ENCODE measurements at regions of chr11 and their contacts with region 1.

Region 1: GRCh38 chr11:111230122-111230465 is 15.4 kb upstream of the POU2AF2 start:
- DNase-seq: no peak
- ATAC-seq: peak; percentile 50
- H3K4me3 ChIP-seq: no peak overlapping the region
- H3K27ac ChIP-seq: peak overlapping the region; percentile 33; the same call in 1 of the 2 replicates
- H3K4me1 ChIP-seq: peaks cover 8% of the 10 kb centered on the region
- H3K27me3 ChIP-seq: no peaks in the 10 kb centered on the region
- CTCF ChIP-seq: no peak
- POLR2A ChIP-seq: no peak
- RAD21 ChIP-seq: no peak

Region 2: GRCh38 chr11:110565357-110566336 is 664.4 kb before region 1 on chr11:
- CTCF ChIA-PET with region 1: no interaction called
- POLR2A ChIA-PET with region 1: no interaction called
- dilution Hi-C with region 1: no loop called
- in situ Hi-C with region 1: no loop called
- intact Hi-C with region 1: loop called (anchors 5 kb)
- DNase-seq: peak; percentile 64
- ATAC-seq: peak; percentile 83
- H3K4me3 ChIP-seq: no peak overlapping the region
- H3K27ac ChIP-seq: no peak overlapping the region
- H3K4me1 ChIP-seq: peaks cover 8% of the 10 kb centered on the region; the same call in 1 of the 2 replicates
- H3K27me3 ChIP-seq: peaks cover 8% of the 10 kb centered on the region
- CTCF ChIP-seq: no peak
- POLR2A ChIP-seq: no peak
- RAD21 ChIP-seq: no peak

Region 3: GRCh38 chr11:110763249-110764011 is 466.7 kb before region 1 on chr11:
- CTCF ChIA-PET with region 1: no interaction called
- POLR2A ChIA-PET with region 1: no interaction called
- dilution Hi-C with region 1: no loop called
- in situ Hi-C with region 1: no loop called
- intact Hi-C with region 1: loop called (anchors 2 kb)
- DNase-seq: peak; percentile 80
- ATAC-seq: peak; percentile 52
- H3K4me3 ChIP-seq: no peak overlapping the region
- H3K27ac ChIP-seq: peak overlapping the region; percentile 86; the same call in 1 of the 2 replicates
- H3K4me1 ChIP-seq: peaks cover 11% of the 10 kb centered on the region
- H3K27me3 ChIP-seq: no peaks in the 10 kb centered on the region
- CTCF ChIP-seq: no peak
- POLR2A ChIP-seq: no peak
- RAD21 ChIP-seq: no peak

Region 4: GRCh38 chr11:110907629-110908028 is 322.5 kb before region 1 on chr11:
- CTCF ChIA-PET with region 1: interaction called, 4 read pairs
- POLR2A ChIA-PET with region 1: no interaction called
- dilution Hi-C with region 1: no loop called
- in situ Hi-C with region 1: no loop called
- intact Hi-C with region 1: loop called (anchors 5 kb)
- DNase-seq: peak; percentile 98
- ATAC-seq: peak; percentile 71
- H3K4me3 ChIP-seq: no peak overlapping the region
- H3K27ac ChIP-seq: no peak overlapping the region
- H3K4me1 ChIP-seq: peaks cover 10% of the 10 kb centered on the region
- H3K27me3 ChIP-seq: 0 out of 2 replicates have a peak, but pooled peaks cover 2% of the 10 kb centered on the region
- CTCF ChIP-seq: no peak
- POLR2A ChIP-seq: no peak
- RAD21 ChIP-seq: no peak

Region 5: GRCh38 chr11:111063726-111064517 is 166.2 kb before region 1 on chr11:
- CTCF ChIA-PET with region 1: interaction called, 3 read pairs
- POLR2A ChIA-PET with region 1: no interaction called
- dilution Hi-C with region 1: no loop called
- in situ Hi-C with region 1: no loop called
- intact Hi-C with region 1: loop called (anchors 2 kb)
- DNase-seq: peak; percentile 92
- ATAC-seq: peak; percentile 95
- H3K4me3 ChIP-seq: no peak overlapping the region
- H3K27ac ChIP-seq: peak overlapping the region; percentile 78
- H3K4me1 ChIP-seq: peaks cover 6% of the 10 kb centered on the region
- H3K27me3 ChIP-seq: no peaks in the 10 kb centered on the region
- CTCF ChIP-seq: no peak
- POLR2A ChIP-seq: no peak
- RAD21 ChIP-seq: 0 out of 2 replicates have a peak, but pooled peaks have one; percentile 8

Region 6: DNA sequence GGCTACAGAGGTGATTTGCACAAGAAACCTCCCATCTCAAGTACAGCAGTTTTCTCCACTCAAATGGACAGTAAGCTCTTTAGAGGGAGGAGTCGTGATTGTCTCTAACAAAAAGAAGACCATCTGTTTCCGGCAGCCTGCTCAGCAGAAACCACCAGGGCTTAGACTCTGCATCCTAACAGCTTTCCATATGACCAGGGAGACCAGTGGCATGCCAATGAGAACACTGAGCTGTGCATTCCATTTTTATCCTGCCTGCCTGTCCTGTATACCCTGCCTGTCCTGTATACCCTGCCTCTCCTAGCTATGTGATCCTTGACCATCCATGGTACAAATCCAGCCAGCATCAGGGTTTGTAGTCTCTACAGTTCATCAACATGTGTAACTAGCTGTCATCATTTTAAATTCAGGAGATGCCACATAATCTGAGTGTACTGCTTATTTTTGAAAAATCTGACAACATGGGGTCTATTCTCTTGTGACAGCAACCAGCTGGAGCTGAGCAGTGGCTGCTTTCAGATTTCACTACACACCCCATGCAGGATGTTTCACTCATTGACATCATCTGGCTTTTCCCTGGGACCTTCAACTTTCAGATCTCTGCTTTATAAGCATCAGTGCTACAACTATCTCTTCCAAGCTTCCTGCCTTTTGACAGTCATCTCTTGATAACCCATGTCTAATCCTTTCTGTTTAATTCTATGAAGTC is 35.1 kb before region 1 on chr11:
- CTCF ChIA-PET with region 1: no interaction called
- POLR2A ChIA-PET with region 1: no interaction called
- dilution Hi-C with region 1: no loop called
- in situ Hi-C with region 1: no loop called
- intact Hi-C with region 1: no loop called
- DNase-seq: peak; percentile 31
- ATAC-seq: peak; percentile 77
- H3K4me3 ChIP-seq: no peak overlapping the region
- H3K27ac ChIP-seq: peak overlapping the region; percentile 21; the same call in 1 of the 2 replicates
- H3K4me1 ChIP-seq: 0 out of 2 replicates have a peak, but pooled peaks cover 7% of the 10 kb centered on the region
- H3K27me3 ChIP-seq: no peaks in the 10 kb centered on the region
- CTCF ChIP-seq: no peak
- POLR2A ChIP-seq: no peak
- RAD21 ChIP-seq: no peak

Region 7: GRCh38 chr11:111246956-111247355 is 16.9 kb after region 1 on chr11:
- CTCF ChIA-PET with region 1: no interaction called
- POLR2A ChIA-PET with region 1: no interaction called
- dilution Hi-C with region 1: no loop called
- in situ Hi-C with region 1: no loop called
- intact Hi-C with region 1: no loop called
- DNase-seq: no peak
- ATAC-seq: no peak
- H3K4me3 ChIP-seq: no peak overlapping the region
- H3K27ac ChIP-seq: no peak overlapping the region
- H3K4me1 ChIP-seq: no peaks in the 10 kb centered on the region
- H3K27me3 ChIP-seq: peaks cover 44% of the 10 kb centered on the region
- CTCF ChIP-seq: no peak
- POLR2A ChIP-seq: no peak
- RAD21 ChIP-seq: no peak

Measured in IMR-90 (cell line).